ENCODE measurements at regions of chr6 and their contacts with region 1.

Region 1: DNA sequence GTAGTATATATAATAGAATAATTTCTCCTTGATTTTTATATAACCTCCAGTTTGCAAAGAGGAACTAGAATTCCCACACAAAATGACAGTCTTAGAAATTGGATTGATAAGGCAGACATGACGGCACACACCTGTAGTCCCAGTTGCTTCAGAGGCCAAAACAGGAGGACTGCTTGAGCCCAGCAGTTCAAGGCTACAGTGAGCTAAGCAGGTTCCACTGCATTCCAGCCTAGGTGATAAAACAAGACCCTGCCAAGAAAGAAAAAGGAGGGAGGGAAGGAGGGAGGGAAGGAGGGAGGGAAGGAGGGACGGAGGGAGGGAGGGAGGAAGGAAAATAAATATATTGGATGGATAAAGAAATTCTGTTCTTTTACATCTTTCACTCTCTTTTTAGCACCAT is 77.6 kb upstream of the SASH1 start:
- DNase-seq: no peak
- H3K4me3 ChIP-seq: no peak overlapping the region
- H3K27ac ChIP-seq: no peak overlapping the region
- H3K4me1 ChIP-seq: no peaks in the 10 kb centered on the region
- H3K27me3 ChIP-seq: no peaks in the 10 kb centered on the region
- CTCF ChIP-seq: no peak

Region 2: GRCh38 chr6:148464319-148465010 is 199.4 kb after region 1 on chr6:
- intact Hi-C with region 1: loop called (anchors 5 kb)
- DNase-seq: peak; percentile 70
- H3K4me3 ChIP-seq: no peak overlapping the region
- H3K27ac ChIP-seq: no peak overlapping the region
- H3K4me1 ChIP-seq: no peaks in the 10 kb centered on the region
- H3K27me3 ChIP-seq: no peaks in the 10 kb centered on the region
- CTCF ChIP-seq: peak; percentile 95

Measured in colonic mucosa (tissue), 4 donors.